PC-3 (cell line): ENCODE measurements at regions of chr10 and their contacts with region 1.

Region 1: GRCh38 chr10:5548527-5549223 is 23.9 kb downstream of the CALML3 start:
- DNase-seq: peak; percentile 79
- ATAC-seq: peak; percentile 7
- H3K4me3 ChIP-seq: peak overlapping the region; percentile 26; the same call in 1 of the 2 replicates
- H3K27ac ChIP-seq: peak overlapping the region; percentile 100
- H3K4me1 ChIP-seq: peaks cover 90% of the 10 kb centered on the region
- H3K27me3 ChIP-seq: no peaks in the 10 kb centered on the region
- CTCF ChIP-seq: no peak

Region 2: DNA sequence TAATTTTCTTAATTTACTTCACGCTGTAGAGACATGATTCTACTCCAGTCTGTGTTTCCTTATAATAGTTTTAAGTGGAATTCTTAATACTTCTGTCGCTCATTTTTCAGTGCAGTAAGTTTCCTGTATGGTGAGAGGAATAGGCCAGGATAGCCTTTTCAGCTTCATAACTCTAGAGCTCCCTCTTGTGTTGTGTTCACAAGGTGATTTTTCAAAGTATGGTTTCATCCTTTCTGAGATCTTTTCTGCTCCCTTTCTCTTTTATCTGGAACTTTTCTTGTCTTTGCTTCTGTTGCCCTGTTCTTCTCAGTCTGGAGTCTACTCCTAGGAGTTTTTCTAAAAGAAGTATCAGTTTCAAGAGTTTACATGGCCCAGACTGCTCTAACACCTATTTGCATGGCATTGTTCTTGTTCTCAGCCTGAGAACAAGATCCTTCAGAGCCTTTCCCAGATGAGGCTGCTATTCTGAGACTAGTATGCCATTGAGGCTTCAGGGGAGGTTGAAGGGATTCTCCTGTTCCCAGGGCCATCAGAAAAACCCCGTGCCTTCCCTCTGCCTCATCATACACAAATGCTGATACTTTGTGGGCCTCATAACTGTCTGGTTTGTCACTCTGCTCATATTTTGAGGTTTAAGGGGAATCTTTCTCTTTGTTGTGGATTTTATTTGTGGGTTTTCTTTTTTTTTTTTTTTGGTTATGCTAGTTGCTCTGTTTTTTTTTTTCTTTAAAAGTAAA is 114.5 kb before region 1 on chr10:
- CTCF ChIA-PET with region 1: no interaction called
- POLR2A ChIA-PET with region 1: interaction called, 13 read pairs
- intact Hi-C with region 1: no loop called
- DNase-seq: peak; percentile 43
- ATAC-seq: peak; percentile 62
- H3K4me3 ChIP-seq: no peak overlapping the region
- H3K27ac ChIP-seq: no peak overlapping the region
- H3K4me1 ChIP-seq: no peaks in the 10 kb centered on the region
- H3K27me3 ChIP-seq: no peaks in the 10 kb centered on the region
- CTCF ChIP-seq: peak; percentile 66

Region 3: DNA sequence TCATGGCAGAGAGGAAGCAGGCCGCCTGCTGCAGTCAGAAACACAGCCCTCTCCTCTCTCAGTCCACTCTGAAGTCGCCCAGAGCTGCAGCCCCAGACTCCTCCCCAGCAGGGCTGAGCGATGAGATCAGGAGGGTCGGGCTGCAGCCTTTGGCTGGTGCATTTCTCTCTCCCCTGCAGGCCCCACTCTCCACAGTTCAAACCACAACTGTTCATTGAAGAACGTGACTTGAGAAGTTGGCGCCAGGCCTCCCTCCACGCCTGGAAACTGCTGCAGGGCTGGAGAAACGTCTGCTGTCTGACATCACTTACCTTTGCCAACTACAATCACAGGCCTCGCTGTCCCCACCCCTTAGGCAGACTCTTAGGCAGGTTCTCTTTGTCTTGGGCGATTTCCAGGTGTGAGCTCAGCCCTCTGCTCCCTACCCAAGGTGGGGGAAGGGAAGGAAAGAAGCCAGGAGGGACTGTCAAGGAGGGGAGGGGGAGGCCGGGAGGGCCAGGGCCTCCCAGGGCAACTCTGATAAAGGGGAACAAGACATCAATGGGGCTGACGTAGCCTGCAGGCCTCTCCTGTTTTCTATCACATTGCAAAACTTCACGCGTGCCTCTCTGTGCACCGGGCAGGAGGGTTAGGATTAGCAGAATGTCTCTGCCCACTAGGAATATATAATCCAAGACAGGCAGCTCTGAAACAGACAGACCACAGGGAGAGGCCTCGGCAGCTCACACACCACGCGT is 82.1 kb before region 1 on chr10:
- CTCF ChIA-PET with region 1: no interaction called
- POLR2A ChIA-PET with region 1: interaction called, 3 read pairs
- intact Hi-C with region 1: loop called (anchors 5 kb)
- DNase-seq: peak; percentile 73
- ATAC-seq: peak; percentile 78
- H3K4me3 ChIP-seq: no peak overlapping the region
- H3K27ac ChIP-seq: peak overlapping the region; percentile 89
- H3K4me1 ChIP-seq: peaks cover 25% of the 10 kb centered on the region
- H3K27me3 ChIP-seq: no peaks in the 10 kb centered on the region
- CTCF ChIP-seq: no peak

Region 4: GRCh38 chr10:5583525-5584175 is 35.0 kb after region 1 on chr10:
- CTCF ChIA-PET with region 1: interaction called, 4 read pairs
- POLR2A ChIA-PET with region 1: interaction called, 17 read pairs
- intact Hi-C with region 1: loop called (anchors 1 kb)
- DNase-seq: peak; percentile 84
- ATAC-seq: peak; percentile 50
- H3K4me3 ChIP-seq: no peak overlapping the region
- H3K27ac ChIP-seq: peak overlapping the region; percentile 100
- H3K4me1 ChIP-seq: peaks cover 36% of the 10 kb centered on the region
- H3K27me3 ChIP-seq: no peaks in the 10 kb centered on the region
- CTCF ChIP-seq: no peak

Region 5: GRCh38 chr10:5623081-5623748 is 74.5 kb after region 1 on chr10:
- CTCF ChIA-PET with region 1: interaction called, 5 read pairs
- POLR2A ChIA-PET with region 1: interaction called, 11 read pairs
- intact Hi-C with region 1: loop called (anchors 2 kb)
- DNase-seq: peak; percentile 81
- ATAC-seq: peak; percentile 90
- H3K4me3 ChIP-seq: no peak overlapping the region
- H3K27ac ChIP-seq: peak overlapping the region; percentile 76
- H3K4me1 ChIP-seq: peaks cover 11% of the 10 kb centered on the region; the same call in 1 of the 2 replicates
- H3K27me3 ChIP-seq: no peaks in the 10 kb centered on the region
- CTCF ChIP-seq: peak; percentile 74